OCI-LY7 (cell line): ENCODE measurements at regions of chr12 and their contacts with region 1.

Region 1: DNA sequence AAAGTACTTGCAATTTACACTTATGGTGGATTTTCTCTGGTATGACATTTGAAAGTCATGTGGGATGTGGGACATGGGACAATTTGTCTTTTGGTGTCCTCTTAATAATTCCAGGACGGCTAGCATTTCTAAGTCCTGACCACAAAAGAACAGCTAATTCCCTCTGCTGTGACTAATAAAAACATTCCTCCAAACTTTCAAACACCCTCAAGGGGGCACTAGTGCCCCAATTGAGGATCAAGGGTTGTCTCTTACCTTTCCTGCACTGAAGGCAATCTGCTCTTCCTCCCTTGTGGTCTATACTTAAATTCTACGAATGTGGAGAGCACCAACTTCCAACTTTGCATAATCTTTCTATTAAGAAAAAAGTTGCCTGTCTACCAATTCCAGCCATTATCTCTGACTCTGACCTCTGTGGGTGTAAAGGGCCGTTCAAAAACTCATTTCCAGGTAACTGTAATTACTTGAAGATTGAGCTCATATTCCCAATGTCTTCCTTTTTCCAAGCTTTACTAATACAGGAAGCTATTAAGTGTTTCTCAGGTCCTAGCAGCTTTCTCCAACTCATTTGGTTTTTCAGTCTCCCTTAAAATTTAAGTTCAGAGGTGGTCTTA is 210.2 kb downstream of the PTPRO start:
- DNase-seq: peak; percentile 72
- H3K4me3 ChIP-seq: no peak overlapping the region
- H3K27ac ChIP-seq: no peak overlapping the region
- H3K4me1 ChIP-seq: no peaks in the 10 kb centered on the region
- CTCF ChIP-seq: peak; percentile 82

Region 2: DNA sequence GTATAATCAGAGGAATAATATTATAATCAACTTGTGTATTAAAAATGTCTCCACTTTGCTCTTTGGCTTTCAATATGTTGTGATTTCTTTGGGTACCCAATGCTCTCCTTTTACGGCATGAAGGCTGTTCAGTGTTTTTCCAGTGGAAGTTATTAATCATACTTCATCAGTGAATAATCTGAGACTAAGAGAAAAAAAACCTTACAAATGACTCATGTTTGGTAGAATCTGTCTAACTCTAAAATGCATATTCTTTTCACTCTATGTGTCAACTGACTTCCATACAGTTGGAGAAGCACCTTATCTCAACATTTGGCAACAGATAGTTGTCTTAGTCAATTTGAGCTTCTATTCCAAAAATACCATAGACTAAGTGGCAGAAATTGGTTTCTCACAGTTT is 128.0 kb before region 1 on chr12:
- CTCF ChIA-PET with region 1: no interaction called
- POLR2A ChIA-PET with region 1: no interaction called
- intact Hi-C with region 1: no loop called
- DNase-seq: no peak
- H3K4me3 ChIP-seq: no peak overlapping the region
- H3K27ac ChIP-seq: no peak overlapping the region
- H3K4me1 ChIP-seq: no peaks in the 10 kb centered on the region
- CTCF ChIP-seq: no peak

Region 3: DNA sequence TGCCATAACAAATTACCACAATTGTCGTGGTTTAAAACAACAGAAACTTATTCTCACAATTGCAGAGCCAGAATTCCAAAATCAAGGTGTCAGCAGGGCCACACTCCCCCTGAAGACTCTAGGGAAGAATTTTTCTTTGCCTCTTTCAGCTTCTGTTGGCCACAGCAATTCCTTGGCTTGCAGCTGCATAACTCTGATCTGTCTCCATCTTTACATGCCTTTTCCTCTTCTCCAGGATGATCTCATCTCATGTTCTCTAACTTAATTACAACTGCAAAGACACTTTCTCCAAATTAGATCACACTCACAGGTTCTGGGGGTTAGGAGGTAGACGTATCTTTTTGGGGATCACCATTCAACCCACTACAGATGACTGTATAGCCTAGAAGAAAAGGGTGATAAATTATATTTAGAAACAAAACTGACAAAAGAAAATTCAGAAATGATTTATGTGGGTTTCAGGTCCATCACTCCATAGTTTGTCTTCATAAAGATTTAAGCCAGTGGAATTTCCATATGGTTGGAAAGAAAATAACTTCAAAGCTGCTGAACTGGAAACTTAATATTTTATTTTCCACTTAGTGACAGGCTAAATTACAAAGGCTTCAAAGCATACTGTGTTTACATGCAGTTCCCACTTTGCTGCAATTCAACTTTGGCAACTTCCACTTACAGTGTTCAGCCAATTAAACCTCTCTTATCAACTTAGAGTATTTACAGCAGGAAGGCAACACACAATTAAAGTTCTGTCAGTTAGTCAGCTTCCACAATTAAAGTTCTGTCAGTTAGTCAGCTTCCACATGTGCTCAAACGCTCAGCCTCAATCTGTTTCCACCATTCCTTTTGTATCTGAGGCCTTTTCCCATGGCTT is 43.4 kb after region 1 on chr12:
- CTCF ChIA-PET with region 1: interaction called, 9 read pairs
- POLR2A ChIA-PET with region 1: interaction called, 11 read pairs
- intact Hi-C with region 1: no loop called
- DNase-seq: no peak
- H3K4me3 ChIP-seq: no peak overlapping the region
- H3K27ac ChIP-seq: no peak overlapping the region
- H3K4me1 ChIP-seq: peaks cover 10% of the 10 kb centered on the region
- CTCF ChIP-seq: no peak

Region 4: GRCh38 chr12:15584366-15585041 is 52.0 kb after region 1 on chr12:
- CTCF ChIA-PET with region 1: interaction called, 15 read pairs
- POLR2A ChIA-PET with region 1: interaction called, 5 read pairs
- intact Hi-C with region 1: loop called (anchors 1 kb)
- DNase-seq: peak; percentile 71
- H3K4me3 ChIP-seq: no peak overlapping the region
- H3K27ac ChIP-seq: no peak overlapping the region
- H3K4me1 ChIP-seq: no peaks in the 10 kb centered on the region
- CTCF ChIP-seq: peak; percentile 91

Region 5: DNA sequence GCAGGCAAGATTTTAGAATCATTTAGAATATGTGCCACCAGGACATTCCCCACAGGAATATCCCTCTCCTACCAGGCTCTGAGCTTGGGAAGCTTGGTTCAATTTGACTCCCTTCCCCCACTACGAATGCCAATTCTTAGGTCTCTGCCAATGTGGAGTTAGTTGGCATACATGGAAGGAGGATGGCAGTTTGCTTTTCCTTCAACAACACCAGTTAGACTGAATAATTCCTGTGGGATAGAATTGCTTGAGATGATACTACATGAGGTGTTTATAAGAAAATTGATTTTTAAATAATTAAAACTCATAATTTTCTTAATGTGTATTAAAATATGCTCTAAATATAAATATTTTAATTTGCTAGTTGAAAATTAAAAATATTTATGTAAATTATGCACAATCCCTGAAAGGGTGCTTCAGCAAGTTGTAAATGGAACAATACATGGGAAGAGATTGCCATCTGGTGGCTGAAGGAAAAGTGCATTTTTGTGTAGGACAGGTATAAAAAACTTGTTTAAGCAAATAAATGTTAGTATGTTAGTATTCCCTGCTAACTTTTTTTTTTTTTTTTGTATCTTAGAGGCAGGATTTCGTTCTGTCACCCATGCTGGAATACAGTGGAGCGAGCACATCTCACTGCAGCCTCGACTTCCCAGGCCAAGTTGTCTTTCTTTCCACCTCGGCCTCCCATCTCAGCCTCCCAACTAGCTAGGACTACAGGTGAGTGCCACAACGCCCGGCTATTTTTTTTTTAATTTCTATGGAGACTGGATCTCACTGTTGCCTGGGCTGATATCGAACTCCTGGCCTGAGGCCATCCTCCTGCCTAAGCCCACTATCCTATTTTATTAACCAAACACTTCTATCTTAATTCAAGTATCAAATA is 323.9 kb after region 1 on chr12:
- CTCF ChIA-PET with region 1: no interaction called
- POLR2A ChIA-PET with region 1: no interaction called
- intact Hi-C with region 1: loop called (anchors 1 kb)
- DNase-seq: peak; percentile 60
- H3K4me3 ChIP-seq: no peak overlapping the region
- H3K27ac ChIP-seq: no peak overlapping the region
- H3K4me1 ChIP-seq: no peaks in the 10 kb centered on the region
- CTCF ChIP-seq: peak; percentile 86